Sciatic nerve (tissue), 2 donors: ENCODE measurements at regions of chr7 and their contacts with region 1.

Region 1: GRCh38 chr7:139777948-139778841 is at the start of gene HIPK2:
- DNase-seq: peak; percentile 81
- ATAC-seq: peak; percentile 74
- total RNA-seq, gene HIPK2: 65.2 TPM

Region 2: GRCh38 chr7:139548302-139549028 is 229.7 kb before region 1 on chr7:
- intact Hi-C with region 1: no loop called
- DNase-seq: no peak
- ATAC-seq: no peak

Region 3: GRCh38 chr7:140160308-140160707 is 382.1 kb after region 1 on chr7:
- intact Hi-C with region 1: loop called (anchors 5 kb)
- DNase-seq: no peak
- ATAC-seq: no peak